ENCODE measurements at regions of chr15 and their contacts with region 1.

Region 1: DNA sequence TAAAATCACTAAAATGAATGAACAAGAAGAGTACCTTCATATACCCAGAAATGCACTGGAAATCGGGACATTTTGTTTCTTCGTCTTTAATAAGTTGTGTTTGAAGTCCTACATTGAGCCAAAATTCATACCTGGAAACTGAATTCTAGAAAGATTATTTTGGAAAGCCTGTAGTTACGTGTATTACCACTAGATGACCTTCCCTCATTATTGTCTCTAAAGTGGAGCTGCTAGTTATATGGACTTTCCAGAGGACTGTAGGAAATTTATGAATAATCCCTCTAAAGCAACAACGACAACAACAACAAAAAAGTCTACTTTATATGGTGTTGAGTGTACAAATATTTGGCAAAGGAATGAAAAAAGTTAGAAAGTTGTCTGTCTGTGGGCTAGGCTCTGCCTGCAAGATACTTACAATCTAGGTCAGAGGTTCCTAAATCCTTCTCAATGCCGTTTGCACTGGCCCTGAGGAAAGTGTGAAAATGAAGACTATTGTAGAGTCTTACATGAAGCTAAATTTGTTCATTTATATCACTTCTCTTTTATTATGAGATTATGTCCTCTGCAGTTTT is 234.8 kb upstream of the NR2E3 start:
- DNase-seq: peak; percentile 49
- ATAC-seq: no peak
- H3K4me3 ChIP-seq: no peak overlapping the region
- H3K27ac ChIP-seq: no peak overlapping the region
- H3K4me1 ChIP-seq: peaks cover 27% of the 10 kb centered on the region
- H3K27me3 ChIP-seq: no peaks in the 10 kb centered on the region
- CTCF ChIP-seq: peak; percentile 79

Region 2: GRCh38 chr15:71485099-71485693 is 90.4 kb before region 1 on chr15:
- CTCF ChIA-PET with region 1: no interaction called
- POLR2A ChIA-PET with region 1: no interaction called
- intact Hi-C with region 1: no loop called
- DNase-seq: peak; percentile 23
- ATAC-seq: no peak
- H3K4me3 ChIP-seq: no peak overlapping the region
- H3K27ac ChIP-seq: no peak overlapping the region
- H3K4me1 ChIP-seq: no peaks in the 10 kb centered on the region
- H3K27me3 ChIP-seq: no peaks in the 10 kb centered on the region
- CTCF ChIP-seq: peak; percentile 69

Region 3: DNA sequence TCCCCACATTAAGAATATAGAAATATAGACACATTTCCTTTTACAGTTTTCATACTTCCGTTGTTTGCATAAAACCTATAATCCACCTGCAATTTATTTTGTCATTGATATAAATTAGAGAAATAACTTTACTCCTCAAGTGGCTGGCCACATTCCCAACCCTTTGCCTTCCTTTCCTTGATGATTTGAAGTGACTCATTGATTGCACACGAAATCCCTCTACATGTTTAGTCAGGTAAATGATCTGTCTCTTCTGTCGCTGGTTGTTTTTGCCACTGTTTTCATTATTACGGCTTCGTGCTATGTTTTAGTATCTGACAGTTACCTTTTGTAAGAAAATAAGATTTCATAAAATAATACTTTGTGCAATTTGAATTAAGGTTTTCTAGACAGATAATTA is 37.4 kb before region 1 on chr15:
- CTCF ChIA-PET with region 1: no interaction called
- POLR2A ChIA-PET with region 1: no interaction called
- intact Hi-C with region 1: loop called (anchors 5 kb)
- DNase-seq: peak; percentile 79
- ATAC-seq: peak; percentile 74
- H3K4me3 ChIP-seq: peak overlapping the region; percentile 39; the same call in 1 of the 2 replicates
- H3K27ac ChIP-seq: peak overlapping the region; percentile 48
- H3K4me1 ChIP-seq: peaks cover 23% of the 10 kb centered on the region
- H3K27me3 ChIP-seq: no peaks in the 10 kb centered on the region
- CTCF ChIP-seq: no peak

Region 4: DNA sequence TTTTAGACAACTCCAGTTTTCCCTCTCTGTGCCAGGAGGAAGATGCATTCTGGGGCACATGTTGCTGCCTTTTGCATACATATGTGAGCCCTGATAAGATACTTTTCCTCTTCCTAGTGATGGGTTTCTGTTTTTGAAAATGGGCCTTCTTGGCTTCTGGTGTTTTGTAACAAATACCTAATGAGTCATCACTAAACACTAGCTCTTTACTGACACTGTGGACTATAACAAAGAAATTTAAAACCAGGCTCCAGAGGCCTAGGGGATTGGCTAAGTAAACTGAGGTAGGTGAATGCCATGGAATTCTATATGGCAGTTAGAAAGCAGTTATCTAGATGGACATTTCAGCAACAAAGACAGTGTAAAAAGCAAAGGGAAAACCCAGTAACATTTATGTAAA is 141.4 kb after region 1 on chr15:
- CTCF ChIA-PET with region 1: no interaction called
- POLR2A ChIA-PET with region 1: no interaction called
- intact Hi-C with region 1: loop called (anchors 10 kb)
- DNase-seq: peak; percentile 35
- ATAC-seq: peak; percentile 56
- H3K4me3 ChIP-seq: no peak overlapping the region
- H3K27ac ChIP-seq: no peak overlapping the region
- H3K4me1 ChIP-seq: peaks cover 10% of the 10 kb centered on the region
- H3K27me3 ChIP-seq: no peaks in the 10 kb centered on the region
- CTCF ChIP-seq: no peak